ENCODE measurements at regions of chr3 and their contacts with region 1.

Region 1: DNA sequence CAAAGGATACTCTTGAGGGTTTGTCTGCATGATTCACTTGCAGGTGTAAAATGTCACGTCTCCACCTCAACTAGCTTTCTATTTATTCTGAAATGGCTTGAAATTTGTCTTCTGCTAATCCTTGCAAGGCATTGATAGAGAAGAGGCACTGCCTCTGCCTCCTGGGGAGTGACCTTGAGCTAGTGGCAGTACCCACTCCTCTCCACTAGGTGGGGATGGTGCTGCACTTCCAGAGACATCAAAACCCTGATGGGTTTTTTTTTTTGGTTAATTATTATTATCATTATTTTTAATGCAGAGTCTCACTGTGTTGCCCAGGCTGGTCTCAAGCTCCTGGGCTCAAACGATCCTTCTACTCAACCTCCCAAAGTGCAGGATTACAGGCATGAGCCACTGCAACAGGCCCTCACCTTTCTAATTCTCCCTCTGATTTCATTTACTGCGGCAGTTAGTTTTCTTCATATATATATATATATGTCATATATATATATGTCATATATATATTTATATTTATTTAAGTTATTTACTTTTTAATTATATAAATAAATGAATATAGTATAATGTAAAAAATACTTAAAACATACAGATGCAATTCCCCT is 117.6 kb upstream of the EIF1B start:
- DNase-seq: peak; percentile 36 to 93 (median 74)

Region 2: DNA sequence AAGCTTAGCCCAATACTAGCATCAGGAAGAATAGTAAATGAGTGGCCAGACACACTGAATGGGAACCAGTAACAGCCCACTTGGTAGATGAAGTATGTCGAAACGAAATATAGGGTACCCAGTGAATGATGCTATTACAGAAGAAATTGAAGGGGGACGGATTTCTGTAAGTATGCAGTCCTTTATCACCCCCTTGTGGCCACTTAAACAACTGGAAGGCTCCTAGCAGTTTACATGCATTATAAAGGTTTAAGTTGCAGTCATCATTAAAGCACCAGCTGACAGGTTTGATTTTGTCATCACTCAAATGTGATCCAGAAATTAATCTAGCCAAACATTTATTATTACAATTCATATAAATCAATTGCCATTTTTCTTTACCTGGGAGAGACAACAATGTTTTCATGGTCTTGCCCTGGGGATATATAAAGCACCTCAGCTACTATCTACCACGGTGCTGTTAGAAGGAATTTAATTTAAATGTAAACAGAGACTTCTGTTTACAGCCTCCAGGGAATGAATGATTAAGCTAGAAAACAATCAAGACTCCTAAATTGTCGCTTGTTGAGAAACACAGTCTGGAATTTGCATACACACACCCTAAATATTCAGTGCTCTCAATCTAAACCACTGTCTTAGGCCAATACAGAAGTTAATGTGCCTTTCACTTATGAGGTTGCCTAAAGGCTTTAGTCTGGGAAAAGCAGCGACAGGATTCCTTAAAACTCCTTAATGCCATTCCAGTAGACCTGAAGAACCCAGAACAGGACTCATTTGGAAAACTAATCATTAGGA is 125.3 kb after region 1 on chr3:
- intact Hi-C with region 1: loop called (anchors 1 kb)
- DNase-seq: peak in 1 of 10 donors; percentile 48